Left cardiac atrium (tissue), 4 donors: ENCODE measurements at regions of chr17 and their contacts with region 1.

Region 1: DNA sequence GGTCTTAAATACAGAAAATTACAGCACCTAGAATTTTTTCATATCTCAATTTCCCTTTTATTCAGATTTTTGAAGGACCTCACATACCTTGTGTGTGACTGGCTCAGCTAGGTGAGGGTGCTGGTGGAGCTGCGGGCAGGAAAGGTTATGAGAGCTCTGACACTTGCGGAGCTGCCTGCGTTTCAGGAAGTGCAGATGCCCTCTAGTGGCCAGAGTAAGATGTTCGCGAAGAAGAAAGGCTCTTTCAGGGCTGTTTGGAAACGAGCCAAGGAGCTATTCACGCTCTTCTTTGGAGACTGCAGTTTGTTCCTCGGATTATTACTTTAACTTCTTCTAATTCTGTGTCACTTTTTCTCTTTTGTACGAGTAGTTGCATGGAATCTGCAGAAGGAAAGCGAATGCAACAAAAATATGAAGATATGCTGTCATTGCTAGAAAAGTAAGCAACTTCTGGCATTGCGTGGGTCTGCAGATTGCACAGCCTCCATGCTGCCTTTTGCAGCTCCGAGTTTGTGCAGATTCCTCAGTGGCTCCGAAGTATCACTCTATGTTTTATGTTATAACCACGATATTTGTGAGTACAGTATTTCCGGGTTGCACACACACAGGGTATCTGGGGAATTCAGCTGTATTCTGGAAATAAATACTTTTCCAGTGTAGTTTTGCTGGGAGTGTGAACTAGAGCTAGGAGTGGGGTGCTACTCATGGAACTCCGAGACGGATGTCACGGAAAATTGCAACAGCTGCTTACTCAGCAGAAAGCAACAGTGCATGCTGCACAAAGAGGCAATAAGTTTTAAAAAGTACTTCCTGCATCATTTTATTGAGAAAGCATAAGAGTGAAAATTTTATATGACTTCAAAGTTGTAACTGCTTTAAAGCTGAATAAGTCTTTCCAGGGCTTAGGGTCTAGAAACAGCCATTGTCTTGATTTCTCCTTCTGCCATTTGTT is 46.3 kb downstream of the DNAH9 start:
- DNase-seq: peak; percentile 69
- ATAC-seq: peak; percentile 35 to 79

Region 2: DNA sequence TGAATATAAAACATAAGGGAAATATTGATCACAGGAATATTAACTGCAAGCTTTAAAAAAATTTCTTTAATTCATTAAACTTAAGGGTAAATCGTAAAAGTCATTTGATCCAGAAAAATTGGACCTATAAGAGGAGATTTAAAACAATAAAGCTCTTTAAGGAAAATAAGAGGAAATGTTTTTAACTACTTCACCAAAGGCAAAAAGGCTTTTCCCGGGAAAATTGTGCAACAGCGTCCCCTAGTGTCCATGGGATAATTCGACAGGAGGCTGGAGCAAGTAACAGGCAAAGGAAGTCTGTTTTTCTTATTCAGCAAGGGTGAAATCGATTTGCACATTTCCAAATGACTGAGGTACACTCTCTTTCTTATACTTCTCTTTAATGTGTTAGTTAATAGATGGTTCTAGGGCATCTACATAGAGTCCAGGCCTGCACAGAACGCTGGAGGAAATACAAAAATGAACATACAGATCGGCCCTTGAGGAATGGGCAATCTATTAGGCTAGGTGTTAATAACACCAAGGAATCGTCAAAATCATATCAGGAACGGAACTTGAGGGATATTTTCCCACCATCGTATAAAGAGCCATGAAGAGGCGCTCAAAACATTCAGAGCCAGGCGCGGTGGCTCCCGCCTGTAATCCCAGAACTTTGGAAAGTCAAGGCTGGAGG is 291.3 kb after region 1 on chr17:
- intact Hi-C with region 1: loop called in 1 of 2 experiments (anchors 10 kb)
- DNase-seq: peak; percentile 57
- ATAC-seq: no peak

Region 3: DNA sequence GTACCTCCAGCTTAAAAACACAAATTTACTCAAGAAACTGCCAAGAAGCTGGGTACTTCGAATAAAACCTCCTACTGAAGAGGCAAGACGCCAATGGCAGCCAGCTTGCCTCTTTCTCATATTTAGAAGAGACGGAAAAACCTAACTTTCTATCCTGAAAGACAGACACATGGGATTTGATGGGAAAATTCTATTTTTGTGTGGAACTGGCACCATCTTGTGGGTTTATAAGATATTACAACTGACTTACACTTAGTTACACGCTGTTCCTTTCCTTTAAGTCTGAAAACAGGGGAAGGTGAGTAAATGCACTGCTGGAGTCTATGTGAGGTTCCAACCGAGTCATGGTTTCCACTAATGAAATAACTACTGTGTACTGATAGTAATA is 342.4 kb after region 1 on chr17:
- intact Hi-C with region 1: loop called in 1 of 2 experiments (anchors 5 kb)
- DNase-seq: no peak
- ATAC-seq: peak; percentile 68 to 72